ENCODE measurements at regions of chr18 and their contacts with region 1.

Region 1: DNA sequence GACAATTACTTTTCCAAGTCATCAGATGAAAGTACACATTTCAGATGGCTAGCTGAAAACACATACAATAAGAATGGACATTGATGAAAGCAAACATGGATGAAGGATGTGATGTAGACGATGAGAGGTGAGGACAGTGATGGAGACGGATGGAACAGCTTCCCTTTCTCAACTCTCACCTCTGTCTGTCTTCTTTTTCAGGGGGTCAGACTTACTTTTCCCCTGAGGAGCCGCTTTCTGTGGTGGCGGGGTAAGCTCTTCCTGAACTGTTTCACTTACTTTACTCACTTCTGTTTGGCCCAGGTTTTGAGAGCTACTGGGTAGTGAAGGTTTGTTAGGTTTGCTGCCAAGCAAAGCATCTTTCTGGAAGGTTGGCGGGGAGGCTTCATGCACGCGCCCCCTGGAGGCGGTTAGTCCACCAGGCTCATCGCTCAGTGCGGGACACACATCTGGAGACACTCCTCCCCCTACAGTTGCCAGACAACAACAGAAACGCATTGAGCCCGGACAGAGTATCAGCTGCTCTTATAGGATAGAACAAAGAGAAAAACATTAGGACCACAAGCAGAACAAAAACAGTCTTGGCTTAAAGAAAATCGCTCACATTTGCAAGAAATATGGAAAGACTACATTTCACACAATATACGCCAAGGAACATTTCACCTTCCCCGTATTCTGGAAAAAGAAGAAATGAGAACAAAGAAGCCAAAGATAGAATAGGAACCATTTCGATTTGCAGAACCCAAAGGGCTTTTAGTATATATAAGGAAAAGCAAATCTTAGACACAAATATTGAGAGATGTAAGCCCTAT is 90.5 kb downstream of the MYOM1 start:
- DNase-seq: peak; percentile 81
- ATAC-seq: peak; percentile 100
- H3K4me3 ChIP-seq: no peak overlapping the region
- H3K27ac ChIP-seq: no peak overlapping the region
- H3K4me1 ChIP-seq: no peaks in the 10 kb centered on the region
- H3K27me3 ChIP-seq: no peaks in the 10 kb centered on the region
- CTCF ChIP-seq: peak; percentile 96

Region 2: GRCh38 chr18:2948038-2948437 is 181.2 kb before region 1 on chr18:
- CTCF ChIA-PET with region 1: interaction called, 4 read pairs
- POLR2A ChIA-PET with region 1: no interaction called
- intact Hi-C with region 1: loop called (anchors 5 kb)
- DNase-seq: peak; percentile 36
- ATAC-seq: peak; percentile 63
- H3K4me3 ChIP-seq: no peak overlapping the region
- H3K27ac ChIP-seq: no peak overlapping the region
- H3K4me1 ChIP-seq: no peaks in the 10 kb centered on the region
- H3K27me3 ChIP-seq: no peaks in the 10 kb centered on the region
- CTCF ChIP-seq: peak; percentile 71

Region 3: GRCh38 chr18:3062798-3063680 is 66.2 kb before region 1 on chr18:
- CTCF ChIA-PET with region 1: interaction called, 6 read pairs
- POLR2A ChIA-PET with region 1: no interaction called
- intact Hi-C with region 1: loop called (anchors 5 kb)
- DNase-seq: peak; percentile 57
- ATAC-seq: peak; percentile 75
- H3K4me3 ChIP-seq: no peak overlapping the region
- H3K27ac ChIP-seq: no peak overlapping the region
- H3K4me1 ChIP-seq: peaks cover 9% of the 10 kb centered on the region
- H3K27me3 ChIP-seq: no peaks in the 10 kb centered on the region
- CTCF ChIP-seq: peak; percentile 92

Region 4: DNA sequence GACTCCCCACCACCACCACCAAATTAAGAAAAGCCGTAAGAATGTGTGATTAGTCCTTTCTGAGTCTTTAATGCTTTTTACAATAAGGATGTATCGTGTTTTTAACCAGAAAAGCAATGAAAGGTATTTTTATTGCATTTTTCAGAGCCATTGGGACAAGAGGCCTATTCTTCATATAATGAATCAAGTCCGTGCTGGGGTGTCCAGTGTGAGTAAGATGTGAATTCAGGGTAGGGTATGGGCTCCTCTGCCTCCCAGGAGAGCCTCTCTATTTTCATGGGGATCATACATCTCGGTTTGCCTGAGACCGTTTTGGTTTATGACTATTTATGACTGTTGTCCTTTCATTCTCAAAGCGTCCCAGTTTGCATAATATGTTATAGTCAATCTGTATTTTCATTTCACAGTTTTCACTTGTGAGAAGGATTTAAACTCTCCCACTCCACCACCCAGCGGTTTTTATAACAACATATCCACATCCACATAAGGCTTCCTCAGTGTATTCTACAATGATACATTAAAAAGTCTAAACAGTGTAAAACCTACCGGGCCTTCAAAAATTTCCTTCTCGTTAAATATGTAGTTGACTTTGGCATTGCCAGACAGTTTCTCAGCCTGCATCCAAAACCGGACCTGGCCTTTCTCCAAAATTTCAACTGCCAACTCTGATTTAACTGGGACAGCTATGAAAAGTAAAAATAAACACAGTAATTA is 35.5 kb before region 1 on chr18:
- CTCF ChIA-PET with region 1: interaction called, 11 read pairs
- POLR2A ChIA-PET with region 1: no interaction called
- intact Hi-C with region 1: no loop called
- DNase-seq: peak; percentile 41
- ATAC-seq: peak; percentile 72
- H3K4me3 ChIP-seq: no peak overlapping the region
- H3K27ac ChIP-seq: peak overlapping the region; percentile 13; the same call in 1 of the 2 replicates
- H3K4me1 ChIP-seq: peaks cover 17% of the 10 kb centered on the region
- H3K27me3 ChIP-seq: no peaks in the 10 kb centered on the region
- CTCF ChIP-seq: no peak

Region 5: DNA sequence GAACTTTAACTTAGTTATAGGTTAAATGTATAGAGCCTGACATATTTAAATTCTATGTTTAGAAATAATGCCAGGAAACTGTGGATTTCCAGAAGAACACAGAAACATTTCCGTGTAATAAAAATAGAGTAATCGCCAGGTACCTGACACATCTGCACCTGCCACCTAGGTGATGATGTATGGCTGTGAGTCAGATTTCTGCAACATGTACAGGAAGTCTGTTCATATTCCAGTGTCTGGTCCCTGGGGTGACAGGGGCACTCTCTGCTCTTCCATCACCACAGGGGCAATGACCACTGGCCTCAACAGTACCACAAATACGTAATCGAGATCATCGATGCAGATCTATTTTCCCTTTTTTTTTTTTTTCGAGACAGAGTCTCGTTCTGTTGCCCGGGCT is 15.2 kb before region 1 on chr18:
- CTCF ChIA-PET with region 1: no interaction called
- POLR2A ChIA-PET with region 1: interaction called, 19 read pairs
- intact Hi-C with region 1: no loop called
- DNase-seq: peak; percentile 52
- ATAC-seq: no peak
- H3K4me3 ChIP-seq: no peak overlapping the region
- H3K27ac ChIP-seq: no peak overlapping the region
- H3K4me1 ChIP-seq: peaks cover 34% of the 10 kb centered on the region
- H3K27me3 ChIP-seq: no peaks in the 10 kb centered on the region
- CTCF ChIP-seq: no peak